Esophagus muscularis mucosa (tissue), 4 donors: ENCODE measurements at regions of chr6 and their contacts with region 1.

Region 1: GRCh38 chr6:29976588-29977424 is 34.5 kb downstream of the HLA-A start:
- DNase-seq: peak; percentile 96
- H3K4me3 ChIP-seq: peak overlapping the region; percentile 58 to 66 (median 60)
- H3K27ac ChIP-seq: peak overlapping the region; percentile 90 to 96 (median 92)
- H3K4me1 ChIP-seq: peaks cover 13 to 34% (median 28%) of the 10 kb centered on the region in 4 donors
- H3K27me3 ChIP-seq: no peaks in the 10 kb centered on the region
- CTCF ChIP-seq: peak; percentile 18 to 44 (median 35)
- EP300 ChIP-seq: no peak
- POLR2A ChIP-seq: no peak

Region 2: DNA sequence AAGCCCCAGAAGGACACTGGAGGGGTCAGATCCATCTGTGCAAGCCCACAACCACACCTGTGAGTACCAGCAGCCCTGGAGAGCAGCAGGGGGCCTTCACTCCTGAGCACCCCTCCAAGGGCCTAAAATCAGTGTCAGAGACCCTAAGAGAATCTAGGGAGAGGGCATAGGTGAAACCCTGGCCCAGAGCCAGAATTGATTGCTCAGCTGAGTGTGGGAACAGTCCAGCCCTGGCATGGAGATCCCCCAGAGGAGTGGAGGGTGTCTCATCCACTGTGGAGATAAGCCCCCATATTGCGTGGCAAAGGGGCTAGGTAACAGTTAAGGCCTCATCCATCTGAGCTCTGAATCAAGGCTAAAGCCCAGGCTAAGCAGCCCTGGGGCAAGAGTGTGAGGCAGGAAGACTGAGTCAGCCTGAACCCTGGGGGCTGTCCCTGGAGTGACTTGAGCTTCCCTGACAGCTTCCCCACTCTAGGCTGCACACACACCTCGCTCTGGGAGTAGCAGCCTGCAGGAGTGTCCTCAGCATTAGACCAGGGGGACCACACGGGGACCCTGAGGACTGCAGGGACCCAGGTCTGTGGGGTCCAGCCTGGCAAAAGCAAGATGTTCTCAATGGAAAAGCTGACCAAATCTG is 445.3 kb before region 1 on chr6:
- intact Hi-C with region 1: no loop called
- DNase-seq: peak; percentile 85
- H3K4me3 ChIP-seq: no peak overlapping the region
- H3K27ac ChIP-seq: no peak overlapping the region
- H3K4me1 ChIP-seq: no peaks in the 10 kb centered on the region
- H3K27me3 ChIP-seq: no peaks in the 10 kb centered on the region
- CTCF ChIP-seq: no peak
- EP300 ChIP-seq: no peak
- POLR2A ChIP-seq: no peak

Region 3: DNA sequence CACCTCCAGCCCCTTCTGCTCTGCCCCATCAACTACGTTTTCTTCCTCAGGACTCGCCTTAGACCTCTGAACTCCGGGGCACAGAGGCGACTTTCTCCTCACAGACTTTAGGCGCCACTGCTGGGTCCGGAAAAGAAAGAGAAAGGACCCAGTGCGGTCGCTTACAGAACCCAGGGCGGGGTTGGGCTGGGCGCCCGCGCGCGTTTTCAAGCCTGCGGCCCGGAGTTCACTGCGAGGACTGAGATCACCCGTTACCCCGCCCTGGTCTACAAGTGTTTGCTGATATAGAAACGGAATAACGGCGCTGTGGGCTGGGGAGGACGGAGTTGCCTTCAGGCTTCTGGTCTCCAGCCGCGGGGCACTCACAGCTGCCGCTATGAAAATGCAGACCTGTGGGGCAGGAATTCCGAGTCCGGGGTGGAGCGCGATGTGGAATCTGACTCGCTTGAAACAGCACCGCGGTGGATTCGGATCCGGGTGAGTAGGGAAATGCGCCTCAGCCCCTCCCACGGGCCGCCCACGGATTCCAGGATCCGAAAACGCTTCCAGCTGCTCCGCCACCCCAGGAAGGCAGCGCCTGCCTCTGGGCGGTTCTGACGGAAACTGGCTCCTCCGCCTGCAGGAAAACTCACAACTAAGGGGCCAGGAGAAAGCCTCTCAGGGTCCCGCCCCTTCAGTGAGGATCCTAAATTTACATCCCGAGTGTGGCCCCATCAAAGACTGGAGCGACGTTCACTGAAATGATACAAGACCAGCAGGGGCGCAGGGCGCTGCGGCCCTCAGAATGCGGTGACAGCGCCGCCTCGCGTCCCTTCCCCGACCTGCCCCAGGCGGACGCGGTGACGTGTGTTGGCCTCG is 224.1 kb before region 1 on chr6:
- intact Hi-C with region 1: loop called (anchors 10 kb)
- DNase-seq: peak; percentile 97
- H3K4me3 ChIP-seq: peak overlapping the region; percentile 65 to 82 (median 69)
- H3K27ac ChIP-seq: peak overlapping the region; percentile 90 to 96 (median 94)
- H3K4me1 ChIP-seq: peaks cover 28 to 39% (median 34%) of the 10 kb centered on the region in 4 donors
- H3K27me3 ChIP-seq: peaks cover 0 to 20% (median 0%) of the 10 kb centered on the region in 4 donors
- CTCF ChIP-seq: peak; percentile 87 to 93 (median 93)
- EP300 ChIP-seq: no peak
- POLR2A ChIP-seq: no peak

Region 4: DNA sequence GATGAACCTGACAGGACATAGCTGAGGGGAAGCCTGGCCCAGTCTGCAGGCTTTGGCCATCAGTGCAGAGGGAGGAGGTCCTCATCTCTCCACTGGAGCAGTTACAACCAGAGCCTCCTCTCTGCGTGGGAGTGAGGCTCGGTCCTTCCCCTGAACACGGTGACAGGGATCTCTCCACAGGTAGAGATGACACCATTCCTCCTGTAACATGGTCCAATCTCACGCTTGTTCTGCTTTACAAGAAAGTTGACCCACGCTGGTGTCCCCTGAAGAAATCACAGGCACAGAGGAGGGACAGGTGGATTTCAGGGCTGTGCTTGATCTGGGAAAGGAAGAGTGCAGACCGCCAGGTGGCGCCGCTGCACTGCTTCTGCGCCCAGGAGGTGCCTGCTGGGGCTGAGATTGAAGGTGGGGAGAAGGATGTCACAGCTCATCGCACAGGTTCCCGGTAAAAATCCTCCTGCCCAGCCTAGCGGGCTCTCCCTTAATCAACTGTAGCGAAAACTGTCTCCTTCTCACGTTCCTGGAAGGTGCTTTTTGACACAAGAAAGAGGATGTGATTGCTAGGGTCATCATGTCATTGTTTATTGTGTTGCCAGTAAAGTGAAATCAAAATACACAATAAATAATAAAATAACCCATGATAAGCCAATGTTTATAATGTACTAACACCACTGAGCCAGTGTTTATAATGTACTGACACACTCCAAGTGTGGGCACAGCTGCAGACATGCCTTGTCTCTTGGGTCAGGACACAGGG is 128.8 kb before region 1 on chr6:
- intact Hi-C with region 1: loop called (anchors 2 kb)
- DNase-seq: no peak
- H3K4me3 ChIP-seq: no peak overlapping the region
- H3K27ac ChIP-seq: no peak overlapping the region
- H3K4me1 ChIP-seq: peaks cover 0 to 7% (median 6%) of the 10 kb centered on the region in 4 donors
- H3K27me3 ChIP-seq: peaks cover 0 to 70% (median 14%) of the 10 kb centered on the region in 4 donors
- CTCF ChIP-seq: peak; percentile 79 to 97 (median 89)
- EP300 ChIP-seq: no peak
- POLR2A ChIP-seq: no peak

Region 5: DNA sequence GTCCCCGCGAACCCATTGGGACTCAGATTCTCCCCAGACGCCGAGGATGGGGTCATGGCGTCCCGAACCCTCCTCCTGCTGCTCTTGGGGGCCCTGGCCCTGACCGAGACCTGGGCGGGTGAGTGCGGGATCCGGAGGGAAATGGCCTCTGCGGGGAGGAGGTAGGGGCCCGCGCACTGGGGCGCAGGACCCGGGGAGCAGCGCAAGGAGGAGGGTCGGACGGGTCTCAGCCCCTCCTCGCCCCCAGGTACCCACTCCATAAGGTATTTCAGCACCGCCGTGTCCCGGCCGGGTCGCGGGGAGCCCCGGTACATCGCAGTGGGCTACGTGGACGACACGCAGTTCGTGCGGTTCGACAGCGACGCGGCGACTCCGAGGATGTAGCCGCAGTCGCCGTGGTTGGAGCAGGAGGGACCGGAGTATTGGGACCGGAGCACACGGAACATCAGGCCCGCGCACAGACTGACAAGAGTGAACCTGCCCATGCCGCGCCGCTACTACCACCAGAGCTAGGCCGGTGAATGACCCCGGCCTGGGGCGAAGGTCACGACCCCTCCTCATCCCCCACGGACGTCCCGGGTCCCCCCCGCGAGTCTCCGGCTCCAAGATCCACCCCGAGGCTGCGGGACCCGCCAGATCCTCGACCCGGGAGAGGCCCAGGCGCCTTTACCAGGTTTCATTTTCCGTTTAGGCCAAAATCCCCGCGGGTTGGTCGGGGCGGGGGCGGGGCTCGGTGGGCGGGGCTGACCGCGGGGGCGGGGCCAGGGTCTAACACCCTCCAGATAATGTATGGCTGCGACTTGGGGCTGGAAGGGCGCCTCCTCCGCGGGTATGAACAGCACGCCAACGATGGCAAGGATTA is 50.2 kb before region 1 on chr6:
- intact Hi-C with region 1: loop called (anchors 10 kb)
- DNase-seq: peak; percentile 93
- H3K4me3 ChIP-seq: peak overlapping the region in 3 of 4 donors; percentile 50 to 78 (median 64)
- H3K27ac ChIP-seq: peak overlapping the region in 3 of 4 donors; percentile 82 to 87 (median 86)
- H3K4me1 ChIP-seq: peaks cover 0 to 6% (median 0%) of the 10 kb centered on the region in 4 donors
- H3K27me3 ChIP-seq: no peaks in the 10 kb centered on the region
- CTCF ChIP-seq: no peak
- EP300 ChIP-seq: no peak
- POLR2A ChIP-seq: no peak

Region 6: GRCh38 chr6:29942275-29943052 is 34.3 kb before region 1 on chr6 and contains the start of gene HLA-A:
- intact Hi-C with region 1: loop called (anchors 5 kb)
- DNase-seq: peak; percentile 99
- H3K4me3 ChIP-seq: peak within 1 kb of the TSS; percentile 56 to 82 (median 64)
- H3K27ac ChIP-seq: peak within 1 kb of the TSS; percentile 82 to 92 (median 89)
- H3K4me1 ChIP-seq: peaks cover 3 to 30% (median 13%) of the 10 kb centered on the region in 4 donors
- H3K27me3 ChIP-seq: no peaks in the 10 kb centered on the region
- CTCF ChIP-seq: no peak
- EP300 ChIP-seq: no peak
- POLR2A ChIP-seq: peak; percentile 85
- total RNA-seq, gene HLA-A: 243 to 610 (median 499) TPM

Region 7: GRCh38 chr6:30130887-30131862 is 154.4 kb after region 1 on chr6:
- intact Hi-C with region 1: no loop called
- DNase-seq: peak; percentile 90
- H3K4me3 ChIP-seq: no peak overlapping the region
- H3K27ac ChIP-seq: no peak overlapping the region
- H3K4me1 ChIP-seq: peaks cover 3 to 15% (median 13%) of the 10 kb centered on the region in 4 donors
- H3K27me3 ChIP-seq: peaks cover 0 to 90% (median 44%) of the 10 kb centered on the region in 4 donors
- CTCF ChIP-seq: peak; percentile 92 to 98 (median 93)
- EP300 ChIP-seq: no peak
- POLR2A ChIP-seq: no peak